ENCODE measurements at regions of chr22 and their contacts with region 1.

Region 1: DNA sequence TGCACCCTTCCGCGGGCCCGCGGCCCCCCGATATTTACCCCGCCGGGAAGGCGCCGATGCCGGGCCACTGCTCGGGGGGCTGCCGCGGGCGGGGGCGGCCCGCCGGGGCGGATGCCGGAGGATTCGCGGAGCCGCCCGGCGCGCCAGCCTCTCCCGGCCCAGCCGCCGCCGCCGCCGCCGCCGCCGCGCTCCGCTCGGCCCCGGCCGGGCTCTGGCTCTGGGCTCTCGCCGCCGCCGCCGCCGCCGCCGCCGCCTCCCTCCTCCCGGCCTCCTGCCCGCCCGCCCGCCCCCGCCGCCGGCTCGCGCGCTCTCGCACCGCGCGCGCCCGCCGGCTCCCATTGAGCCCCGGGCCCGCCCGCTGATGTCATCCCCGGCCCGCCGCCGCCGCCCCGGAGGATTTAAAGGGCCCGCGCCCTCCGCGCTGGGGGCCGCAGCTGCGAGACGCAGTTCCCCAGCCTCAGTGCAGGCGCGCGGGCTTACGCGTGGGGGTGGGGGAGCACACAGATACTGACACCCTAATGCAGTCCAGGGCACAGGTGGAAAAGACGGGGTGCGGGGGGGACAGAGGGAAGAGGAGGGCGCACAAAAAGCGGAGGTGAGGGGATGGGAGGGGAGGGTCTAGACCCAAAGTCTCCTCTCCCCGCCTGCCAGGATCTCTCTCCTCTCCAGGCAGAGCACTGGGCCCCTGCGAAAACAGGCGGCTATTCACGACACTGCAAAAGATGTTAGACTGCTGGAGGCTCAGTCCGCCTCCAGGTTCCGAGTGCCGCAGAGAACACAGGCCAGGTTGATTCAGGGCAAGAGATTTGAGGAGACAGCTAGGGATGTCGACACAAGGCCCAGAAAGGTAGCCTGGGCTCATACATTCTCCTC is at the start of gene CSNK1E:
- DNase-seq: peak; percentile 84
- ATAC-seq: peak; percentile 61
- H3K4me3 ChIP-seq: peak within 1 kb of the TSS; percentile 3 to 71 (median 58)
- H3K4me3 Mint-ChIP-seq: peak within 1 kb of the TSS; percentile 92
- H3K27ac ChIP-seq: peak within 1 kb of the TSS; percentile 82 to 91
- H3K27ac Mint-ChIP-seq: peak within 1 kb of the TSS; percentile 97
- H3K4me1 ChIP-seq: peaks cover 40 to 51% of the 10 kb centered on the region in 2 donors
- H3K4me1 Mint-ChIP-seq: peaks cover 49% of the 10 kb centered on the region
- H3K27me3 ChIP-seq: no peaks in the 10 kb centered on the region
- H3K27me3 Mint-ChIP-seq: no peaks in the 10 kb centered on the region
- CTCF ChIP-seq: no peak
- total RNA-seq, gene CSNK1E: 133 and 136 TPM in 2 replicates

Region 2: GRCh38 chr22:38272373-38273134 is 44.8 kb before region 1 on chr22 and contains the start of gene TMEM184B:
- CTCF ChIA-PET with region 1: no interaction called
- POLR2A ChIA-PET with region 1: interaction called, 3 read pairs
- intact Hi-C with region 1: loop called (anchors 1 kb)
- DNase-seq: peak; percentile 90
- ATAC-seq: peak; percentile 96
- H3K4me3 ChIP-seq: peak within 1 kb of the TSS; percentile 48 to 98 (median 76)
- H3K4me3 Mint-ChIP-seq: peak within 1 kb of the TSS; percentile 94
- H3K27ac ChIP-seq: peak within 1 kb of the TSS; percentile 66 to 85
- H3K27ac Mint-ChIP-seq: peak within 1 kb of the TSS; percentile 92
- H3K4me1 ChIP-seq: peaks cover 15 to 21% of the 10 kb centered on the region in 2 donors
- H3K4me1 Mint-ChIP-seq: peaks cover 38% of the 10 kb centered on the region
- H3K27me3 ChIP-seq: peaks cover 0 to 3% (median 0%) of the 10 kb centered on the region in 4 experiments
- H3K27me3 Mint-ChIP-seq: no peaks in the 10 kb centered on the region
- CTCF ChIP-seq: no peak
- total RNA-seq, gene TMEM184B: 23.5 and 24.7 TPM in 2 replicates

Region 3: DNA sequence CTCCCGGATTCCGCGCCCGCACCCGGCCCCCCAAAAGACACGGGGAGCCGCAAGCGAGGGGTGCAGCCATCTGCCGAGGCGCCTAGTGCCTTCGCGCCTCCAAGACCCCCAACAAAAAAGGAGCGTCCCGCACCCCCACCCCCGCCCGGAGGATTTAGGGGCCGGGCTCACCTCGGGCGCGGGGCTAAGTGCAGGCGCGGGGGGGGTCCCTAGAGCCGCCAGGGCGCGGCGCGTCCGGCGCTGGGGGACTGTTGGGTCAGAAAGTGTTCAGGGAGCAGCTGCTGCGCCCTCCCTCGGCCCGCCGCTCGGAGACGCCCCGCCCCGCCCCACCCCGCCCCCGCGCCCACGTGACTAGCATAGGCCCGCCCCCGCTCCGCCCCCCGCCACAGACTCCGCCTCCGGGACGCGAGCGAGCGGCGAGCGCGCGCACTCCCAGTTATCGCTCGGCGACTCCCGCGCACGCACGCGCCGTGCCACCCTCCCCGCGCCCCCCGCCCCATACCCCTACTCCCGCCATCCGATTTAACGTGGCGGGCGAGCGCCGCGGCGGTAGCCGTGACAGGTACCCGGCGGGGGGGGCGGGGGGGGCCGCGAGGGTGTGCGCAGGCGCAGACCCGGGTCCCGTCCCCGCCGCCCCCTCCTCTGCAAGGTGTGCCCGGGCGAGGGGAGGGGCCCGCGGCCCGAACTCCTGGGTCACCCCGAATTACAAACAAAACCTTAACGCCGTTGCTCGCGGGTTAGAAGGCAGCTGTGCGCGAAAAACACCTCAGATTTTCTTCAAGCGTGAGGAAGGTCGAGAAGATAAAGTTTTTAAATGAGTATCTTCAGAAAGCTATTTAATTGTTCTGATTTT is 81.5 kb after region 1 on chr22:
- CTCF ChIA-PET with region 1: no interaction called
- POLR2A ChIA-PET with region 1: interaction called, 3 read pairs
- intact Hi-C with region 1: loop called (anchors 2 kb)
- DNase-seq: peak; percentile 87
- ATAC-seq: peak; percentile 76
- H3K4me3 ChIP-seq: peak overlapping the region; percentile 2 to 75 (median 61)
- H3K4me3 Mint-ChIP-seq: peak overlapping the region; percentile 84
- H3K27ac ChIP-seq: peak overlapping the region; percentile 82 to 86
- H3K27ac Mint-ChIP-seq: peak overlapping the region; percentile 91
- H3K4me1 ChIP-seq: peaks cover 23 to 28% of the 10 kb centered on the region in 2 donors
- H3K4me1 Mint-ChIP-seq: peaks cover 36% of the 10 kb centered on the region
- H3K27me3 ChIP-seq: no peaks in the 10 kb centered on the region
- H3K27me3 Mint-ChIP-seq: no peaks in the 10 kb centered on the region
- CTCF ChIP-seq: no peak

Region 4: GRCh38 chr22:38569972-38570778 is 252.8 kb after region 1 on chr22 and contains the start of gene DMC1:
- CTCF ChIA-PET with region 1: interaction called, 3 read pairs
- POLR2A ChIA-PET with region 1: no interaction called
- intact Hi-C with region 1: loop called (anchors 2 kb)
- DNase-seq: peak; percentile 94
- ATAC-seq: peak; percentile 98
- H3K4me3 ChIP-seq: peak within 1 kb of the TSS; percentile 71 to 93 (median 75)
- H3K4me3 Mint-ChIP-seq: peak within 1 kb of the TSS; percentile 89
- H3K27ac ChIP-seq: peak within 1 kb of the TSS; percentile 25 to 46
- H3K27ac Mint-ChIP-seq: peak within 1 kb of the TSS; percentile 70
- H3K4me1 ChIP-seq: peaks cover 14 to 18% of the 10 kb centered on the region in 2 donors
- H3K4me1 Mint-ChIP-seq: peaks cover 14% of the 10 kb centered on the region
- H3K27me3 ChIP-seq: no peaks in the 10 kb centered on the region
- H3K27me3 Mint-ChIP-seq: no peaks in the 10 kb centered on the region
- CTCF ChIP-seq: no peak
- total RNA-seq, gene DMC1: 0.22 and 0.64 TPM in 2 replicates

Measured in B cell (primary cell).